Mammary epithelial cell (primary cell): ENCODE measurements at regions of chr5 and their contacts with region 1.

Region 1: DNA sequence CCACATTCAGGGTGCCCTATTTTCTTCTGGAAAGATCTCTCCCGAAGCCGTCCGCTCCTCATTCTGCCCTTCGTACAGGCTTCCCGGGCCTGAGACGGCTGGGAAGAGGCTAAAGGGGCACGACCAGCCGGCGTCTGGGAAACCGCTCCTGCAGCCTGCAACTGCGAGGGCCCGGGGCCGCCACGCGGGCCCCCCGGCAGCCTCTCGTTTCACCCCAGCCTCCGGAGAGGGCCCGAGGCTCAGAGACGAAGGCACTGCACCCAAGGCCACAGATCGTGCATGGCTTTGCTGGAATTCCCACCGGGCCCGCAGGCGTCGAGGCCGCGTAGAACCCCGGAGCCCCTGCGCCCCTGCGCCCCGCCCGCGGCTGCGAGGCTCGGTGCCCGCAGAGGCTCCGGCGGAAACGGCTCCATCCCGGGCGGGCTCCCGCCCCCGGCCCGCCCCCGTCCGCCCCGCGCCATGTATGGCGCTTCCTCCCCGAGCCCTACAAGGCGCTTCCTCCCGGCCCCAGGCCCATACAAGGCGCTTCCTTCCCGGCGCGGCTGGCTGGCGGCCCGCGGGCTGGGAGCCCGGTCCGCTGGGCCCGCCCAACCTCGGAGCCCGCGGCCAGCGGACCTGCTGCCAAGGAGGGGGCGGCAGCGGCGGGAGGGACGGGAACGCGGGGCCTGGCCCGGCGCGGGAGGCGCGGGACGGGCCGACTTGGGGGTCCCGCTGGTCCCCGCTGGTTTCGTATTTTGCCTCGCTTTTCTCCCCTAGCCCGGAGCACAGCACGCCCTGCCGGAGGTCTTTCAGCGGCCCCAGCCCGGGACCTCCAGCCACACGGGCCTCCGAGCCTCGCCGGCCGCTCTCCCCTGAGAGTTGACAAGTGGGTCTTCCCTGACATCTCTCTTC is 26.6 kb downstream of the EGR1 start:
- DNase-seq: peak; percentile 87
- H3K4me3 ChIP-seq: peak overlapping the region; percentile 39 to 48 (median 48)
- H3K27ac ChIP-seq: no peak overlapping the region
- H3K4me1 ChIP-seq: peaks cover 59% of the 10 kb centered on the region
- H3K27me3 ChIP-seq: no peaks in the 10 kb centered on the region
- CTCF ChIP-seq: no peak

Region 2: DNA sequence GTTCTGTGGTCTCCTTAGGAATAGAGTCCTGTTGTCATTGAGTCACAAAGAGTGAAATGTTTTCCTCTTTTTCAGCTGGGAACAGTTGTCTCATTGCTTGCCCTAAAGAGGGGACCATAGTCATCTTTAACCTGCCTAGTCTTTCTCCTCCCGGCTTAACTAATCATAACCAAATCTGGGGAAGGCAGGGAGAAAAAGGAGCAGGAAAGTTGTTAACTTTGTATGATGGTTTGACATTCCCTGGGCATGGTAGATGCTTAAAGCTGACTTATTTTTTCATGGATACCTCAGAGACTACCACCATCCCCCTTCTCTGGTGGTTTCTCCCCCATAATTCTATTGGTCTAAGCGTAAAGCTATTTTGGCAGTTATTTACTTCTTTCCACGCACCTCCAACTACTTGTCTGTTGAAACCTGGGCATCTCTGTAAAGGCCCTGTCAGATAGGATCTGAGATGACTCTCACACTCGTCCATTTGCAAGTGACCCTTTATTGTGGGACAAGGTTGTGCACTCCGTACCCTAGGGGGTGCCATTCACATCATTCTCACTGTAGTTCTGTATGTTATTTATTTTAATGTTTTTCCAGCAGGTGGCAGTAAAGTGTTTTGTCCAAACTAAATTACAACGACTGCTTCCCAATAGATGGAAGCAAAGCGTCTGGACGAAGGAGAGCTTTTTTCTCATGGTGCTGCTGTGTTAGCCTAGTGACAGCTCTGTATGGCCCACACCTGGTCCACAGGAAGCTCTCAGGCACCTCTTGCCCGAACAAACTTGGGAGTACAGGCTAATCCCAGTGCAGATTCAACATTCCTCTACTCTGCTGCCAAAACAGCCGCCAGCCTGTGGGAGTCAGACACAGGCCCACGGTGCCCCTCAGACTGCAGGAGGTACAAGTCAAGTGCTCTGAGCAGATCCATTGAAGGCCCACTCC is 456.0 kb before region 1 on chr5:
- CTCF ChIA-PET with region 1: no interaction called
- dilution Hi-C with region 1: no loop called
- in situ Hi-C with region 1: no loop called
- intact Hi-C with region 1: no loop called
- DNase-seq: peak; percentile 77
- H3K4me3 ChIP-seq: no peak overlapping the region
- H3K27ac ChIP-seq: no peak overlapping the region
- H3K4me1 ChIP-seq: peaks cover 10% of the 10 kb centered on the region
- H3K27me3 ChIP-seq: no peaks in the 10 kb centered on the region
- CTCF ChIP-seq: peak; percentile 83 to 88

Region 3: DNA sequence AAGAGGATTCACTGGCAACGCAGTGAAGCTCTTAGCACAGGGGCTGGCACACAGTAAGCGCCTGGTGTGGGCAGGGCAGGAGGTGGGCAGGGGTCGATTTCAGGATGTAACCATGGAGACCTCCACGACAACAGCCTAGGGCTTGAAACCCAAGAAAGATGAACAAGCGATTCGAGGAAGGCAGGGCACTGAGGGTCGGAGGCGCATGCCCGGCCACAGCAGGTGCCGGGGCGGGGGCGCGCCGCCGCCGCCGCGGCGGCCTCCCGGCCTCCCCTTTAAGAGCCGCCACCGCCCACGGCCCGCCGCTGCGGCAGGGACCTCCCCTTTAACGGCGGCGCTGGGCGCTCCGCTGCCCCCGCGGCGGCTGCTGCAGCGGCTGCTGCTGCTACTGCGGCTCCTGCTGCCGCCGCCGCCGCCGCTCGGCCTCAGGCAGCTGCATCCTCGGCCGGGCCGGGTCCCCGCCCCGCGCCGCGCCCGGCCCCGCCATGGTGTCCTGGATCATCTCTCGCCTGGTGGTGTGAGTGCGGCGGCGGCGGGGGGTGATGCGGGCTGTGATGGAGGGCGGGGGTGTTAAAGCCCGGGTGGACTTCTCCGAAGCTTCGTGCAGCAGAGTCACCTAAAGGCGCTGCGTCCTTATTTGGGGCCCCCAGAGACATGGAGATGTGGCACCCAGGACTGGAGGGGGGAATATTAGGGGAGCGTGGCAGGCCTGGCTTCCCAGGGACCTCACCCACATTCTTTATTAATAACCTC is 53.0 kb before region 1 on chr5 and contains the start of gene REEP2:
- CTCF ChIA-PET with region 1: no interaction called
- dilution Hi-C with region 1: loop called (anchors 5 kb)
- in situ Hi-C with region 1: no loop called
- intact Hi-C with region 1: no loop called
- DNase-seq: peak; percentile 43
- H3K4me3 ChIP-seq: peak within 1 kb of the TSS; percentile 39 to 48 (median 43)
- H3K27ac ChIP-seq: no peak within 1 kb of the TSS
- H3K4me1 ChIP-seq: peaks cover 16% of the 10 kb centered on the region
- H3K27me3 ChIP-seq: no peaks in the 10 kb centered on the region
- CTCF ChIP-seq: no peak
- total RNA-seq, gene REEP2: 14.5 to 26.5 TPM

Region 4: GRCh38 chr5:138464008-138464387 is 27.9 kb before region 1 on chr5:
- CTCF ChIA-PET with region 1: no interaction called
- dilution Hi-C with region 1: loop called (anchors 5 kb)
- in situ Hi-C with region 1: no loop called
- intact Hi-C with region 1: no loop called
- DNase-seq: peak; percentile 94
- H3K4me3 ChIP-seq: peak overlapping the region; percentile 66 to 90 (median 83)
- H3K27ac ChIP-seq: peak overlapping the region; percentile 84
- H3K4me1 ChIP-seq: peaks cover 45% of the 10 kb centered on the region
- H3K27me3 ChIP-seq: no peaks in the 10 kb centered on the region
- CTCF ChIP-seq: peak; percentile 58 to 71

Region 5: DNA sequence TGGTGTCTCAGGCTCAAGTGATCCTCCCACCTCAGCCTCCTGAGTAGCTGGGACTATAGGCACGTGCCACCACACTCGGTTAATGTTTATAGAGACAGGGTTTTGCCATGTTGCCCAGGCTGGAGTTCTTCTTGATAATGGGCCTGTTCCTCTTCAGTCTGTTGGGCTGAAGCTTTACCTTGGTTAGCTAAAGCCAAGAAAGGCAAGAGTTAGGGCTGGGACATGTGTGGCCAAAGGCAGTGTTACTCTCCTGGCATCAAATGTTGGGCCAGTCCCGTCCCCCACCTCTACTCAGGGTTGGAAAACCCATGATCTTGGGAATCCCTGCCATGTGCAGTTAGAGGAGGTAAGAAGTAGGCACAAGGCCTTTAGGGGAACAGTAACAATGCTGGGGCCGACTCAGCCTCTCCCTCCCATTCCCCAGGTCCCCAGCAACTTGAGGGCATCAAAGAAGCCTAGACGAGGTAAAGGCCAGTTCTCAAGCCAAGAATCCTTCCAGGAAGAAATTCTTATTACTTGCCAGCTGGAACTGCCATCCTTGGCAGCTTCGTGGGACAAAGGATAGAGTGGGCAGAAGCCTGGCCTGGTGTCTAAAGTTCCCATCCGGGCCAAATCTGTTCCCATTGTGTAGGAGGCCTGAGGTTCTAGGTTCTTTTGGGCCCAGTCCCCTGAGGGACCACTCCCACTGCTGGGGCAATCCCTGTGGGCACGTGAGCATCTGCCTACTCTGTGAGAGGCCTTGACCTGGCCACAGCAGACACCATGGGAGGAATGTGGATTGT is 22.2 kb before region 1 on chr5:
- CTCF ChIA-PET with region 1: no interaction called
- dilution Hi-C with region 1: no loop called
- in situ Hi-C with region 1: no loop called
- intact Hi-C with region 1: loop called (anchors 2 kb)
- DNase-seq: peak; percentile 53
- H3K4me3 ChIP-seq: no peak overlapping the region
- H3K27ac ChIP-seq: no peak overlapping the region
- H3K4me1 ChIP-seq: peaks cover 32% of the 10 kb centered on the region
- H3K27me3 ChIP-seq: no peaks in the 10 kb centered on the region
- CTCF ChIP-seq: no peak

Region 6: DNA sequence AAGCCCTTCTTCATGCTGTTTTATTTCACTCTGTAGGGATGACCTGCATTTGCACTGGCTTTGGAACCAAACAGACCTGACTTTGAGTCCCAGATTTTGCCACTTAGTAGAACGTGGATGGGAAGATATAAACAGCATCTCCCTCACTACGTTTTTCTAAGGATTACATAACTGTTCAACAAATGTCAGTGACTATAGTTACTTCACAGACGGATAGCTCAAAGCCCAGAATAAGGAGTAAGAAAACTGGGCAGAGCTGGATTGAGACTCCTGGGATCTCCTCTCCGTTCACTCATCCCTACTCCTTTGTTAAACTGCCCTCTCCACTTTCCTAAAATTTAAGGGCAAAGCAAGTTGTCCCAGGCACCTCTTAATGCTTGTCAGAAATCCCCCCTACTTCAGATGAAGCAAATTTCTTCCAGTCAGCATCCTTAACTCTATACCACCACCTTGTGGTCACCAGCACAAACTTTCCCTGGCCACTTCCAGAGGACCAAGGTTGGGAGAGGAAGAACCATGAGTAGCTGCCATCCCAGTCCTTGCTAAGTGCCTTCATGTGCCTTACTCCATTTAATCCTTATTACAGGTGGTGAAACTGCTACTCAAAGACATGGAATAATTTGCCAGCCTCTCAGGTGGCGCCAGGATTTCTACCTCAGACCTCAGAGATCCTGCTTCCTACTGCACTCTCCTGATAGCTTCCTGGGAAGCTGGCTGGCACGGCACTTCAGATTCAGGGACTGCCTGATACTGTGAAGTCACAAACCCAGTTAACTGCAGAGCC is 11.8 kb after region 1 on chr5:
- CTCF ChIA-PET with region 1: interaction called, 3 read pairs
- dilution Hi-C with region 1: no loop called
- in situ Hi-C with region 1: no loop called
- intact Hi-C with region 1: loop called (anchors 1 kb)
- DNase-seq: peak; percentile 52
- H3K4me3 ChIP-seq: no peak overlapping the region
- H3K27ac ChIP-seq: no peak overlapping the region
- H3K4me1 ChIP-seq: peaks cover 45% of the 10 kb centered on the region
- H3K27me3 ChIP-seq: no peaks in the 10 kb centered on the region
- CTCF ChIP-seq: peak; percentile 84 to 91

Region 7: DNA sequence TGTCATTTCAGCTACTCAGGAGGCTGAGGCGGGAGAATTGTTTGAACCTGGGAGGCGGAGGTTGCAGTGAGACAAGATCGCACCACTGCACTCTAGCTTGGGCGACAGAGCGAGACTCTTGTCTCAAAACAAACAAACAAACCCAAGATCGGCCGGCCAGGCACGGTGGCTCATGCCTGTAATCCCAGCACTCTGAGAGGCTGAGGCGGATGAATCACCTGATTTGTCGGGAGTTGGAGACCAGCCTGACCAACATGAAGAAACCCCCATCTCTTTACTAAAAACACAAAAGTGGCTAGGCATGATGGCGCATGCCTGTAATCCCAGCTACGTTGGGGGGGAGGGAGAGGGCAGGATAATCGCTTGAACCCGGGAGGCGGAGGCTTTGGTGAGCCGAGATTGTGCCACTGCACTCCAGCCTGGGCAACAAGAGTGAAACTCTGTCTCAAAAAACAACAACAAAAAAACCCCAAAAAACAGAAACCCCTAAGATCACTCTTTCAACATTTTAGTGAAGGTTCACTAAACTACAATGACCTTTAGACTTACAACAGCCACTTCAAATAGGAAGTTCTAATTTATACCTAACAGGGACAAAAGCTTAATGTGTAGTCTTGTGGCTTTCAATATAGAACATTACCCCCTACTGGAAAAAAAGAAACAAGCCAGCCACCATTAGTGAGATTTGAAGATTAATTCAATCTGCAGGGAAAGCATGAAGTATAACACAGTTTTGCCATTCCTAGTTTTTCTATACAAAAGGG is 76.3 kb after region 1 on chr5:
- CTCF ChIA-PET with region 1: no interaction called
- dilution Hi-C with region 1: loop called (anchors 5 kb)
- in situ Hi-C with region 1: no loop called
- intact Hi-C with region 1: no loop called
- DNase-seq: no peak
- H3K4me3 ChIP-seq: no peak overlapping the region
- H3K27ac ChIP-seq: no peak overlapping the region
- H3K4me1 ChIP-seq: no peaks in the 10 kb centered on the region
- H3K27me3 ChIP-seq: no peaks in the 10 kb centered on the region
- CTCF ChIP-seq: peak; percentile 3 to 15